Activated B cell treated with CpG ODN at 0.5 μM for 24 hours (primary cell): ENCODE measurements at regions of chr20 and their contacts with region 1.

Region 1: GRCh38 chr20:47725248-47725973 is 59.9 kb downstream of the SULF2 start:
- DNase-seq: peak; percentile 65
- ATAC-seq: peak; percentile 31
- H3K4me3 Mint-ChIP-seq: no peak overlapping the region
- H3K27ac Mint-ChIP-seq: no peak overlapping the region
- H3K4me1 Mint-ChIP-seq: peaks cover 50% of the 10 kb centered on the region
- H3K27me3 Mint-ChIP-seq: no peaks in the 10 kb centered on the region
- CTCF ChIP-seq: no peak

Region 2: GRCh38 chr20:47464380-47465101 is 260.9 kb before region 1 on chr20:
- CTCF ChIA-PET with region 1: no interaction called
- POLR2A ChIA-PET with region 1: no interaction called
- intact Hi-C with region 1: no loop called
- DNase-seq: no peak
- ATAC-seq: no peak
- H3K4me3 Mint-ChIP-seq: no peak overlapping the region
- H3K27ac Mint-ChIP-seq: peak overlapping the region; percentile 50
- H3K4me1 Mint-ChIP-seq: peaks cover 37% of the 10 kb centered on the region
- H3K27me3 Mint-ChIP-seq: no peaks in the 10 kb centered on the region
- CTCF ChIP-seq: no peak

Region 3: GRCh38 chr20:47677635-47678453 is 47.6 kb before region 1 on chr20:
- CTCF ChIA-PET with region 1: no interaction called
- POLR2A ChIA-PET with region 1: no interaction called
- intact Hi-C with region 1: loop called (anchors 5 kb)
- DNase-seq: peak; percentile 61
- ATAC-seq: peak; percentile 71
- H3K4me3 Mint-ChIP-seq: no peak overlapping the region
- H3K27ac Mint-ChIP-seq: no peak overlapping the region
- H3K4me1 Mint-ChIP-seq: no peaks in the 10 kb centered on the region
- H3K27me3 Mint-ChIP-seq: no peaks in the 10 kb centered on the region
- CTCF ChIP-seq: no peak

Region 4: DNA sequence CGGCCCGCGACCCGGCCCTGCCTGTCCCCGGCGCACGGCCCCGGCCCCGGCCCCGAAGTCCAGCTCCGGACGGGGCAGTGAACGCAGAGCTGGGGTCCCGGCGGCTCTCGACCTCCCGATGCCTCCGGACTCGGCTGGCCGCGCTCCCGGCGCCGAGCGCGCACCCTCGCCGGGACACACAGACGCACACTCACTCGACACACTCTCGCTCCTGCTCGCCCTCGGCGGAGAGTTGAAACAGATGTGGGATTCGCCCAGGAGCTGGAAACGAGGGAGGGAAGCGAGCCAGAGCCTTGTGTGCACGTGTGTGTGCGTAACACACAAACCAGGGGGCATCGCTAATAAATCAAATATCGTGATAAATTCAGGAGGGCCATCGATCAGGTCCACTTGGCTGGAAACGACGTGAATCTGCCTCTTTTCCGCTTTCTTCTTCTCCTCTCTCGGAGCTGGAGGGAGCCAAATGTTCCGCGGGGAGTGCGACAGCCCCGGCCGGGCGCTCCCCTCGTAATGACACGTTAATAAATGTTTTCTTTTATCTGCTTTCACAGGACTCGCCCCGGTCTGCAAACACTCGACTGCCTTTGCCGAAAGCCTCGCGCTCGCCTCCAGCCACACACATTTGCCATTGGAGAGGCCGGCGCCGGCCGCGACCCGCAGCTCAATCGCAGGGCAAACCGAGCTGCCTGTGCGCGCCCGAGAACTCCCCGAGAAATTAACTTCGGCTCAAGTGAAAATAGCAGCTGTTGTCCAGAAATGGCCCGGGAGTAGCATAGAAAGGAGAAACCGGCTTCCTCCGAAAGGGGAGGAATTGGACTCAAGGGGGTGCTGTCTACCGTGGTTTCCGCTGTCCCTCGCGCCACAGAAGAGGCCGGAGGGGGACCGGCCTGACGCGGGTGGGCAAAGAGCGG is 60.7 kb after region 1 on chr20:
- CTCF ChIA-PET with region 1: interaction called, 6 read pairs
- POLR2A ChIA-PET with region 1: no interaction called
- intact Hi-C with region 1: loop called (anchors 1 kb)
- DNase-seq: peak; percentile 38
- ATAC-seq: peak; percentile 49
- H3K4me3 Mint-ChIP-seq: peak overlapping the region; percentile 86
- H3K27ac Mint-ChIP-seq: no peak overlapping the region
- H3K4me1 Mint-ChIP-seq: peaks cover 18% of the 10 kb centered on the region
- H3K27me3 Mint-ChIP-seq: peaks cover 40% of the 10 kb centered on the region
- CTCF ChIP-seq: no peak

Region 5: GRCh38 chr20:48329635-48330277 is 604.3 kb after region 1 on chr20:
- CTCF ChIA-PET with region 1: interaction called, 5 read pairs
- POLR2A ChIA-PET with region 1: no interaction called
- intact Hi-C with region 1: loop called (anchors 1 kb)
- DNase-seq: no peak
- ATAC-seq: no peak
- H3K4me3 Mint-ChIP-seq: no peak overlapping the region
- H3K27ac Mint-ChIP-seq: no peak overlapping the region
- H3K4me1 Mint-ChIP-seq: no peaks in the 10 kb centered on the region
- H3K27me3 Mint-ChIP-seq: peaks cover 15% of the 10 kb centered on the region
- CTCF ChIP-seq: no peak

Region 6: DNA sequence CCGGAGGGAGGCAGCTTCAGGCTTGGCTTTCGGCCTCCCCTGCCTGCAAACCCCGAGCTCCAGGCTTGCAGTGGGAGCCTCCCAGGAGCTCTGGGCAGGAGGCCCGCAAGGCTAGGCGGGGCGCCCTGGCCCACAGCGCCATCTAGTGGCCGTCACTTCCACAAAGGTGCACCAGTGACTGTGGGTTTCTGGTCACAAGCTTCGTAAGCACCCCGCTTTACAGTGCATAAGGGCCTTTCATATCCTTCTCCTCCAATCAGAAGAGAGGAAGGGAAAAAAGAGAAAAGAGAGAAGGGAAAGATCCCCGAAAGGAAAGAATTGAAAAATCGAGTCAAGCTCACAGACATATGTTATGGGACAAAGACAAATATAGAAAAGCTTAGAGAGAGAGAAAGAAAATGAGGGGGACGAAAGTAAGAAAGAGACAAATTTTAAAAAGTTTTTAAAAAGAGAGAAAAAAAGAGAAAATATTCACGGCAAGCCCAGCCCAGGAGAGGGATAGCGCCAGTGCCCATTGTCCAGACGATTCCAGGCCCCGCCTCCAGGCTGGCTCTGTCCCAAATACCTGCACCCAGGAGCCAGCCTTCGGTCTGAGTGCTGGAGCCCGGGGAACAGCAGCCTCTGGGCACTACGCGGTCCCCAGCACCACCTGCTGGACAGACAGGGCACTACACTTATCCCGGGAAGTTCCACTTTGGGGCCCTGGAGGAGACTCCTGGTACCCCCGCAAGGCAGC is 895.3 kb after region 1 on chr20:
- CTCF ChIA-PET with region 1: interaction called, 108 read pairs
- POLR2A ChIA-PET with region 1: interaction called, 5 read pairs
- intact Hi-C with region 1: loop called (anchors 1 kb)
- DNase-seq: peak; percentile 70
- ATAC-seq: peak; percentile 95
- H3K4me3 Mint-ChIP-seq: peak overlapping the region; percentile 50
- H3K27ac Mint-ChIP-seq: no peak overlapping the region
- H3K4me1 Mint-ChIP-seq: peaks cover 10% of the 10 kb centered on the region
- H3K27me3 Mint-ChIP-seq: no peaks in the 10 kb centered on the region
- CTCF ChIP-seq: peak; percentile 51